T-cell (primary cell): ENCODE measurements at regions of chr3 and their contacts with region 1.

Region 1: DNA sequence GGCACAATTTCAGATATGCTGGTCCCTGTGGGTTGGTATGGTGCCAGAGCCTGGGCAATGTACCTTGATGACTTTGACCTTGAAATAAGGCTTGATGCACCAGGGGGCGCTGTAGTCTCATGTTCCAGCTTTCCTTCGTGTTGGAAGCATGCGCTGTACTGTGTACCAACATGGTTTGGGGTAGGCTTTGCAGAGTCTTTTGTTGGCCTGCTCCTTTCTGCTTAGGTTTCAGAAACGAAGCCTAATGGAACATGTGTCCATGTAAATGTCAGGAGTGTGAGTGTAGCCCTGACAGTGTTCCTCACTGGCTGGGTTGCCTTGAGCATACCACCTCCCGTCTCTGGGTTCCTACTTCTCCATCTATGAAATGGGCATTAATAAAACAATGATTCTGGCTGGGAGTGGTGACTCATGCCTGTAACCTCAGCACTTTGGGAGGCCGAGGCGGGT is 3.6 kb upstream of the CCR4 start:
- DNase-seq: peak; percentile 65 to 96 (median 85)
- ATAC-seq: peak; percentile 68 to 76 (median 74)
- H3K4me3 ChIP-seq: no peak overlapping the region
- H3K4me3 Mint-ChIP-seq: no peak overlapping the region
- H3K27ac ChIP-seq: no peak overlapping the region
- H3K27ac Mint-ChIP-seq: peak overlapping the region in 1 of 2 donors; percentile 28
- H3K4me1 ChIP-seq: peaks cover 7 to 28% of the 10 kb centered on the region in 2 experiments
- H3K4me1 Mint-ChIP-seq: peaks cover 30 to 42% (median 37%) of the 10 kb centered on the region in 3 donors
- H3K27me3 ChIP-seq: peaks cover 0 to 3% of the 10 kb centered on the region in 2 experiments
- H3K27me3 Mint-ChIP-seq: no peaks in the 10 kb centered on the region

Region 2: GRCh38 chr3:33105341-33105948 is 157.6 kb after region 1 on chr3:
- CTCF ChIA-PET with region 1: interaction called in 1 of 2 experiments, 12 read pairs
- POLR2A ChIA-PET with region 1: interaction called in 1 of 2 experiments, 5 read pairs
- DNase-seq: no peak
- ATAC-seq: no peak
- H3K4me3 ChIP-seq: no peak overlapping the region
- H3K4me3 Mint-ChIP-seq: no peak overlapping the region
- H3K27ac ChIP-seq: no peak overlapping the region
- H3K27ac Mint-ChIP-seq: no peak overlapping the region
- H3K4me1 ChIP-seq: no peaks in the 10 kb centered on the region
- H3K4me1 Mint-ChIP-seq: peaks cover 0 to 5% (median 0%) of the 10 kb centered on the region in 3 donors
- H3K27me3 ChIP-seq: peaks cover 0 to 3% of the 10 kb centered on the region in 2 experiments
- H3K27me3 Mint-ChIP-seq: peaks cover 8 to 11% of the 10 kb centered on the region in 2 donors